ENCODE measurements at regions of chr15 and their contacts with region 1.

Region 1: GRCh38 chr15:29560896-29561295 is 261.4 kb downstream of the TJP1 start:
- DNase-seq: no peak
- ATAC-seq: no peak
- H3K4me3 ChIP-seq: no peak overlapping the region
- H3K27ac ChIP-seq: no peak overlapping the region
- H3K4me1 ChIP-seq: no peaks in the 10 kb centered on the region
- H3K27me3 ChIP-seq: peaks cover 0 to 48% (median 15%) of the 10 kb centered on the region in 7 donors
- CTCF ChIP-seq: no peak

Region 2: GRCh38 chr15:29269485-29270168 is 291.3 kb before region 1 on chr15 and contains the start of gene NSMCE3:
- intact Hi-C with region 1: loop called in 1 of 10 experiments (anchors 5 kb)
- DNase-seq: peak; percentile 89 to 92
- ATAC-seq: peak; percentile 99 to 100 (median 100)
- H3K4me3 ChIP-seq: peak within 1 kb of the TSS; percentile 63 to 92 (median 82)
- H3K27ac ChIP-seq: peak within 1 kb of the TSS; percentile 63 to 96 (median 94)
- H3K4me1 ChIP-seq: peaks cover 0 to 38% (median 24%) of the 10 kb centered on the region in 9 donors
- H3K27me3 ChIP-seq: no peaks in the 10 kb centered on the region
- CTCF ChIP-seq: no peak
- total RNA-seq, gene NSMCE3: 5.0 to 9.2 (median 6.4) TPM

Measured in heart right ventricle (tissue), 16 donors.